Calu3 (cell line): ENCODE measurements at regions of chr15 and their contacts with region 1.

Region 1: DNA sequence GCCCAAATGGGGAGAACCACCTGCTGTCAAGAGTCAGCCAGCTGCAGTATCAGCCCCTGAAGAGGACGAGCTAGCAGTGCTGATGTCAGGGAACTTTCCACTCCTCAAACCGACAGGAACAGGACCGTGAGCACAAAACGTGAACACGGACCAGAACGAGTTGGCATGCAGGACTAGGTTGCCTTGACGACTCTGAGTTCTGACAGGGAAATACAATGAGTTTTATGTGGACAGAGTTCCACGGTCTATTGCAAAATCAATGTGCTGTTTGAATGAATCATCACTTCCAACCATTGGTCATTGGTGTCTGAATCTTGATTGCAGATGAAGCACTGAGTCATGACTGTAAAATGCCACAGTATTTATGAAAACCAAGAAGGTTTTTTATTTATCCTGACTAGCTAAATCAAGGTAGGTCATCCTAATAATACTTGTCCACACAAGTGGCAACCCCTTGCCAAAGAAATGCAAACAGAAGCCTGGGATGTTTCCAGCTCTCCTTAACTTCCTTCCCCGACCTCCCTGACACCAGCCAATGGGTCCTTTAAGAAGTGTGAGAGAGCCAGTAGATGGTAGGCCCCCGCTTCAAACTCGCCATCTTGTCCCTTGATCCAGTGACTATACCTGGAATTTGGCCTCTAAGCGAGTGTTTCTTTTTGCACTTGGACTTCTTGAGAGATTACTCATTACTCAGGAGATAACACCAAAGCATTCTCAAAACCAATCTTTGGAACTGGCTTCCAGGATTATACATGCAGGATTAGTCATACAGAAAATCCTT is 119.6 kb downstream of the ASB7 start:
- DNase-seq: peak; percentile 89
- H3K4me3 Mint-ChIP-seq: peak overlapping the region; percentile 48
- H3K27ac Mint-ChIP-seq: peak overlapping the region; percentile 97
- H3K4me1 Mint-ChIP-seq: peaks cover 78% of the 10 kb centered on the region
- H3K27me3 Mint-ChIP-seq: no peaks in the 10 kb centered on the region
- CTCF ChIP-seq: no peak

Region 2: DNA sequence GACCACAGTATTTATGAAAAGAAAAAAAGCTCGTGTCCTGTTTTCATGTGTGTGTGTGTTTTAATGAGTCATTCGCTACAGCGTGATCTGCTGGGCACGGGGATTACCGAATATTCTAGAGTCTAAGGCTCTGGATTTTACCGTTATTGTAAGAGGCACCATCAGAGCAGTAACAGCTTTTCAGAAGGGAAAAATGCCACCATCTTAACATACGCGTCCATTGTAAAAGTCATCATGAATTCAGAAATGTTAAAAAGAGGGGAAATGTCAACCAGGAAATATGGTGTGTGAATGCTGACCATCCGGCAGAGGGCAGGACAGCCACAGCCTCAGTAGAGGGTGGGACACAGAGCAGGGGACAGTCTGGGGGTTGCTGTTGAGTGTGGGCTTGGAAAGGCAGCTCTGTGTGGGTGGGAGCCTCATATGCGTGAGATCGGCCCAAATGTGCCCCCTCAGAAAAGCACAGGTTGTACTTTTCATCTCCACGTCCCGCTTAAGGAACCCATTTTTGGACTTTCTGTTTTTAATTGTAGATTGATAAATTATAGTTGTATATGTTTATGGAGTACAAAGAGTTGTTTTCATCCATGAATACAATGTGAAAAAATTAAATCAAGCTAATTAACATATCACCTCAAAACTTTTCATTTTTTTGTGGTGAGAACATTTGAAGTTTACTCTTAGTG is 50.0 kb before region 1 on chr15:
- CTCF ChIA-PET with region 1: interaction called, 4 read pairs
- intact Hi-C with region 1: loop called (anchors 2 kb)
- DNase-seq: peak; percentile 78
- H3K4me3 Mint-ChIP-seq: peak overlapping the region; percentile 16
- H3K27ac Mint-ChIP-seq: peak overlapping the region; percentile 86
- H3K4me1 Mint-ChIP-seq: peaks cover 32% of the 10 kb centered on the region
- H3K27me3 Mint-ChIP-seq: no peaks in the 10 kb centered on the region
- CTCF ChIP-seq: peak; percentile 81

Region 3: DNA sequence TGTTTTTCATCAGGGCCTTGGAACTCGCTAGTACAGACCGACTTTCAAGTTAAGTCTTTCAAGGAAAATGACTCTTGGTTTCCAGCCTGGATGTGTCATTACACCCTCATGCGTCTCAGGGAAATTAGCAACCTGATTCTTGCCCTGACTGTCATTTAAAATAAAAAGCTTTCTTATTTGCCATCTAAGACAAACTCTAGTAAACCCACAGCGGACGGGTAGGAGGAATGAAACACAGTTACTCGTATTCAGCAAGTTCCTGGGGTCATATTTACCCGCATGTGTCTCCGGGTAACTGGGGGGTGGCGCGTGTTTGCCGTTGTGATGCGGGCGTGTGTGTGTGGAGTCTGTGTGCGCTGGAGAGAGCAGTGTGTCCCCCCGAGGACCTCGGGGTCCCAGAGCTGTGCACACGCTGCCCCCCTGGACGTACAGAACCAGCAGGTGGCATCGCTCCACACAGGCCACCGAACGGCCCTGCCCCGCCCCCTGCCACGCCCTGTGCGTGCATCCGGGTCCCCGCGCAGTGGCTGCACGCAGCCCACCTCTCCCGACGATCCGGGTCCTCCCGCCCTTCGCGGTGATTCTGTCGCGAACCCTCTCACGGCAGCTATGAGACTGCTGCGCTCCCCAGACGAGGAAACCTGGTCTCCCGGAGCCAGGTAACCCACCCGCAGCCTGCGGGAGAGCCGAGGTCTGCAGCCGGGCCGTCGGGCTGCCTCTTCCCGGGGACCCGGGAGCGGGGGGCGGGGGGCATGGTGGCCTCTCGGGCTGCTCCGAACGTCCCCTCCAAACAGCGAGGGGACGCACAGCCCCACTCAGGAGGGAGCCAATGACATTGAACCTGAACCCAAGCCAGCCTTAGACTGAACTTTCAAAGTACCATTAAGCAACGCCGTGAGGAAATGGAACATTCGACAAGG is 127.6 kb after region 1 on chr15:
- CTCF ChIA-PET with region 1: no interaction called
- intact Hi-C with region 1: loop called (anchors 2 kb)
- DNase-seq: peak; percentile 93
- H3K4me3 Mint-ChIP-seq: peak overlapping the region; percentile 93
- H3K27ac Mint-ChIP-seq: peak overlapping the region; percentile 90
- H3K4me1 Mint-ChIP-seq: peaks cover 28% of the 10 kb centered on the region
- H3K27me3 Mint-ChIP-seq: no peaks in the 10 kb centered on the region
- CTCF ChIP-seq: peak; percentile 73

Region 4: GRCh38 chr15:100879464-100880138 is 157.6 kb after region 1 on chr15 and contains the start of gene ALDH1A3:
- CTCF ChIA-PET with region 1: interaction called, 5 read pairs
- intact Hi-C with region 1: loop called (anchors 1 kb)
- DNase-seq: peak; percentile 96
- H3K4me3 Mint-ChIP-seq: peak within 1 kb of the TSS; percentile 79
- H3K27ac Mint-ChIP-seq: peak within 1 kb of the TSS; percentile 81
- H3K4me1 Mint-ChIP-seq: peaks cover 31% of the 10 kb centered on the region
- H3K27me3 Mint-ChIP-seq: no peaks in the 10 kb centered on the region
- CTCF ChIP-seq: no peak
- total RNA-seq, gene ALDH1A3: 666 and 983 TPM in 2 replicates

Region 5: GRCh38 chr15:101773496-101774105 is 1051.6 kb after region 1 on chr15:
- CTCF ChIA-PET with region 1: no interaction called
- intact Hi-C with region 1: no loop called
- DNase-seq: peak; percentile 62
- H3K4me3 Mint-ChIP-seq: no peak overlapping the region
- H3K27ac Mint-ChIP-seq: no peak overlapping the region
- H3K4me1 Mint-ChIP-seq: no peaks in the 10 kb centered on the region
- H3K27me3 Mint-ChIP-seq: peaks cover 83% of the 10 kb centered on the region
- CTCF ChIP-seq: peak; percentile 28